ENCODE measurements at regions of chr9 and their contacts with region 1.

Region 1: DNA sequence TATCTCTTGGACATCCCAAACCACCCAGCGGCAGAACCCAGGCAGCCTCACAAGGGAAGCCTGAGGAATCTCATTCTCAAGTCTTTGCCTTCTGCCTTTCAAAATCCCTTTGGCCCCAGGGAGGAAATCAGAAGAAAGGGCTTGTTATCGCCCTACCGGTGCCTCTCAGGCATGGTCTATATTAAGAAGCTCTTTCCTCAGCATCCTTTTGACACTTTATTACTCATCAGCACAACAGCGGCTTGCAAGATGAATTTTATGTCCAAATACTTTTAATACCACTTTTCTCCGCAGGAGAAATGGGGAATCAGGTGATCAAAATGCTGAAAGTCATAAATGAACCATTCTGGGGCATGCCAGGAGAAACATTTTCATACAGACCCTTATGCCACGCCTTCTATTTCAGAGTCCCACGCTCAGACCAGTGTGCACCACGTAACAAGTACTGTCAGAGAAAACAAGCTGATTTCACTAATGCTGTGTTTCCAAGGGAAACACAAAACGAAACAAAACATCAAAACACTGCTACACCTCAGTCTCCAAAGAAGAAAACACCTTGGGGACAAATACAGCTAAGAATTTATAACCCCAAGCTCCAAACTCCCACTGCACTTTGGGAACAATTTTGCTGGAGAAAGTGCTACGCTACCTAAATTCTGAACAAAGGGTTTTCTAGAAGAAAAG is 30.0 kb downstream of the RAPGEF1 start:
- DNase-seq: peak; percentile 73
- CTCF ChIP-seq: no peak

Region 2: DNA sequence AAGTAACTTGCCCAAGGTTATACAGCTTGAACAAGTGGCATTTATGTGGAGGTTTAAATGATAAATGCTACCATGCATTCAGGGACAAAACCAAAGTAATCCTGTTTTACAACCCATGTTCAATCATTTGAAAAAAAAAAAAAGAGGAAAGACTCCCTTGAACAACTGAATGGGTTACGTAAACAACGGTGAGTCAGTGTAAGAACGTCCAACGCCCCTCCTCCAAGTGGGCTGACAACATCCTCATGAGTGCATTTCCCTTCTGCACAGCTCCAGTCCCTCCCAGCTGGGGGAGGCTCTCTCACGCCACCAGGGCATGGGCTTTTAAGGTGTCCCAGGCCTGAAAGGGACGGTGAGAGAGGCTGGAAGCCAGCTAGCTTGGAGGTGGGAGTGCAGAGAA is 74.6 kb before region 1 on chr9:
- CTCF ChIA-PET with region 1: no interaction called
- POLR2A ChIA-PET with region 1: no interaction called
- DNase-seq: peak; percentile 63
- CTCF ChIP-seq: no peak

Region 3: GRCh38 chr9:131722009-131722629 is 12.2 kb after region 1 on chr9:
- CTCF ChIA-PET with region 1: interaction called, 15 read pairs
- POLR2A ChIA-PET with region 1: interaction called, 7 read pairs
- DNase-seq: no peak
- CTCF ChIP-seq: no peak

Region 4: DNA sequence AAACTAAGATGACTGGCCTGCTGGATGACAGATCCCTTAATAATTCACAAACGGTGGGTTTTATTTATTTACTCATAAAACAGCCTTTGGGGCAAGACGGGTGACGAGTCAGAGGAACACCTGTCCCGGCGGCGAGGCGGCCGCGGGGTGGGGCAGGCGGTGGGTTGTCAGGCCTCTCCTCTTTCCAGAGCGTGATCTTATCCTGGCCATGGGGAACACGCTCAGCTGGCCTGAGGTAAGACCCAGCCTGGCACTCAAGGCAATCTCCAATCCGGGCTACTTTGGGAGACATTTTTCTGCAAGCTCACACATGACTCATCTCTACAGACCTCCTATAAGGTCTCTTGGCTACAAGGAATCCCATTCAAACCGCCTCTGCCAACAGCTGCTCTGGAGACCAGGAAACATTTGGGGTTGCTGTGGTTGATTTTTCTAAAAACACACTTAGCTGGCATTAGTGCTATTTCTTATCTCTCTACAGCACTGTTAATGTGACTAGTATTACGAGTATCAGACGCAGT is 23.7 kb after region 1 on chr9:
- CTCF ChIA-PET with region 1: interaction called, 21 read pairs
- POLR2A ChIA-PET with region 1: interaction called, 7 read pairs
- DNase-seq: no peak
- CTCF ChIP-seq: no peak

Region 5: DNA sequence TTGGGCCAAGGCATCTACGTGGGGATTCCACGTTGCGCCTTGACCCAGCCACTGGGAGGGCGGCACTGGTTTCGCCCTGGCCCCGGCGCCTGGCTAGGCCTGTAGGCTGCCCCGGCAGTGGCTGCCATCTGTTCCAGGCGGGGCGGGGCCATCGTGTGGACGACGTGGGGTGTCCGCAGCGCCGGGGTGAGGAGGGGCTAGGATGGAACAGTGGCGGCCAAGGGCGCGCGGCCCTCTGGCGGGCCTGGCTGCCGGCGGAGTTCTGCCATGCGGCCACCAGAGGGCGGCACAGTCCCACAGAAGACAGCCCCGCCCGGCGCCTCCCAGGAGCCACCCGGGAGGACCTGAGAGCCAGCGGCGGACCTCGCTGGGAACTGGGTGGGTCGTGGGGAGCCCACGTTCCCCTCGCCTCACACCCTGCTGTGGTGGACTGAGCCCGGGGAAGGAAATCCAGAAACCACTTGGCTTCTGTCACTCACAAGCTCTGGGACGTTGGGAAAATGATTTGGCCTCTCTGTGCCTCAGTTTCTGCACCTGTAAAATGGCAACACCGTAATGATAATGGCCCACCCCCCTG is 52.5 kb after region 1 on chr9:
- CTCF ChIA-PET with region 1: no interaction called
- POLR2A ChIA-PET with region 1: no interaction called
- DNase-seq: peak; percentile 91
- CTCF ChIP-seq: peak; percentile 92

Region 6: DNA sequence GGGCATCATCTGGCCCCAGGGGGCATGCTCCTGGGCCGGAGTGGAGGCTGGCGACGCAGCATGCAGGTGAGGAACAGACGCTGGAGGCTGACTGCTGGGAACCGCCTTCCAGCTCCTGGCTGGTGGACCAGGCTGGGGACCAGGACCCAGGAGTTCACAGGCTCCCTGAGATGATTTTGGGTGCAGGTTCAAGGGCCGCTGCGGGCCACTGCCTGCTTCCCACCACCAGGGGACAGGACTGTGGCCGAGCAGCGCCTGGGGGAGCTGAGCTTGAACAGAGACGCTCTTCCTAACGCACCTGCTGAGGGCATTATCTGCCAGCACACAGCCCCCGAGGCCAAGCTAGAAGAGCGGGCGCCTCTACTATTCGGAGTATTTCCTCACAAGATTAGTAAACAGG is 162.1 kb after region 1 on chr9:
- CTCF ChIA-PET with region 1: no interaction called
- POLR2A ChIA-PET with region 1: no interaction called
- DNase-seq: no peak
- CTCF ChIP-seq: no peak

Region 7: GRCh38 chr9:131943351-131943841 is 233.5 kb after region 1 on chr9:
- CTCF ChIA-PET with region 1: no interaction called
- POLR2A ChIA-PET with region 1: no interaction called
- DNase-seq: no peak
- CTCF ChIP-seq: no peak